Activated T-helper 1 cell treated with anti-CD3 and anti-CD28 coated beads, Interleukin-12 subunit alpha, Interleukin-12 subunit beta, Interleukin-2, Interleukin-4 antibody, amounts not matched to agents 30 ng/mL and 10 ng/mL and 1 ng/mL, durations not matched to agents 14 hours and 24 hours and 36 hours (primary cell): ENCODE measurements at regions of chr11 and their contacts with region 1.

Region 1: GRCh38 chr11:72141066-72141465 is 5.5 kb downstream of the FOLR3 start:
- DNase-seq: no peak
- H3K4me3 Mint-ChIP-seq: no peak overlapping the region
- H3K27ac Mint-ChIP-seq: peak overlapping the region; percentile 41
- H3K4me1 Mint-ChIP-seq: peaks cover 33% of the 10 kb centered on the region
- H3K27me3 Mint-ChIP-seq: peaks cover 14% of the 10 kb centered on the region

Region 2: GRCh38 chr11:71977743-71978418 is 163.2 kb before region 1 on chr11:
- intact Hi-C with region 1: loop called (anchors 5 kb)
- DNase-seq: peak; percentile 26
- H3K4me3 Mint-ChIP-seq: no peak overlapping the region
- H3K27ac Mint-ChIP-seq: no peak overlapping the region
- H3K4me1 Mint-ChIP-seq: peaks cover 11% of the 10 kb centered on the region
- H3K27me3 Mint-ChIP-seq: no peaks in the 10 kb centered on the region

Region 3: GRCh38 chr11:72030472-72031045 is 110.5 kb before region 1 on chr11:
- intact Hi-C with region 1: loop called (anchors 1 kb)
- DNase-seq: no peak
- H3K4me3 Mint-ChIP-seq: no peak overlapping the region
- H3K27ac Mint-ChIP-seq: no peak overlapping the region
- H3K4me1 Mint-ChIP-seq: peaks cover 33% of the 10 kb centered on the region
- H3K27me3 Mint-ChIP-seq: no peaks in the 10 kb centered on the region

Region 4: DNA sequence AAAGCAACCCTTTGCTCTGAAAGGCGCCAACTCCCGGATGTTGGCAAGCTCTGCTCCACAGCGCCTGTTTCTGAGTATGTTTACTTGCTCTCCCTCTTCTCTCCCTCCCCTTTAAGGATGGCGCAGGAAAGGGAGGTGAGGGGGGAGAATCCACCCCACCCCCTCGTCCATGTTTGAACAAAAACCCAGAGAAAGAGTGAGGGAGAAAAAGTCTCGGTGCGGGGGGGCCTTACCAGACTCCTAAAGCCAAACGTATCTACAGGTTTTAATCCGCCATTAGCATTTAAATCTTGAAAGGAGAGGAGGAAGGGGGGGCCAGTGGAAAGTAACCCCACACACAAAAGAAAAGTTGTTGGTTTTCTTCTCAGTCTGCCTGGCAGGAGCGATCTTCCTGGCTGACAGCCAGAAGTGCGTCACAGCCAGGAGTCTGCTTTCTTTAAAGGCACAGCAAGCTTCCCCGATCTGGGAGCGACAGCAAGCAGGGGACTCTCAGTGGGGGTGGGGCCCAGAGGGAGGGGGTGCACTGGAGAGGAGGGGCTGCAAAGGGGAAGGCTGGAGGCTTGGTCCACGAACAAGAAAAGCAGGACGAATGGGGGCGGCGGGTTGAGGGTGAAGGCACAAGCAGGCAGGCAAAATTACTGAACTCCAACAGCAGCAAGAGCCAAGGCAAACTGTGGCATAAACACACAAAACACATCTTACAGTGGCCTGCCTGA is 100.2 kb before region 1 on chr11:
- intact Hi-C with region 1: loop called (anchors 5 kb)
- DNase-seq: peak; percentile 59
- H3K4me3 Mint-ChIP-seq: no peak overlapping the region
- H3K27ac Mint-ChIP-seq: no peak overlapping the region
- H3K4me1 Mint-ChIP-seq: peaks cover 23% of the 10 kb centered on the region
- H3K27me3 Mint-ChIP-seq: no peaks in the 10 kb centered on the region

Region 5: GRCh38 chr11:72102946-72103753 is 37.9 kb before region 1 on chr11 and contains the start of gene LAMTOR1:
- intact Hi-C with region 1: loop called (anchors 1 kb)
- DNase-seq: peak; percentile 97
- H3K4me3 Mint-ChIP-seq: peak within 1 kb of the TSS; percentile 95
- H3K27ac Mint-ChIP-seq: peak within 1 kb of the TSS; percentile 87
- H3K4me1 Mint-ChIP-seq: peaks cover 41% of the 10 kb centered on the region
- H3K27me3 Mint-ChIP-seq: no peaks in the 10 kb centered on the region
- total RNA-seq, gene LAMTOR1: 70.2 and 77.7 TPM in 2 replicates

Region 6: GRCh38 chr11:72112321-72113219 is 28.5 kb before region 1 on chr11 and contains the start of gene ANAPC15:
- intact Hi-C with region 1: loop called (anchors 1 kb)
- DNase-seq: peak; percentile 97
- H3K4me3 Mint-ChIP-seq: peak within 1 kb of the TSS; percentile 90
- H3K27ac Mint-ChIP-seq: peak within 1 kb of the TSS; percentile 98
- H3K4me1 Mint-ChIP-seq: peaks cover 28% of the 10 kb centered on the region
- H3K27me3 Mint-ChIP-seq: no peaks in the 10 kb centered on the region
- total RNA-seq, gene ANAPC15: 49.4 and 51.9 TPM in 2 replicates

Region 7: GRCh38 chr11:72439455-72439854 is 298.4 kb after region 1 on chr11:
- intact Hi-C with region 1: no loop called
- DNase-seq: no peak
- H3K4me3 Mint-ChIP-seq: no peak overlapping the region
- H3K27ac Mint-ChIP-seq: no peak overlapping the region
- H3K4me1 Mint-ChIP-seq: peaks cover 13% of the 10 kb centered on the region
- H3K27me3 Mint-ChIP-seq: peaks cover 14% of the 10 kb centered on the region